ENCODE measurements at regions of chr17 and their contacts with region 1.

Region 1: GRCh38 chr17:45013021-45013997 is 38.1 kb downstream of the DCAKD start:
- DNase-seq: no peak
- ATAC-seq: peak; percentile 57
- H3K4me3 ChIP-seq: no peak overlapping the region
- H3K27ac ChIP-seq: no peak overlapping the region
- H3K4me1 ChIP-seq: peaks cover 10% of the 10 kb centered on the region; the same call in 1 of the 2 replicates
- H3K27me3 ChIP-seq: peaks cover under 1% of the 10 kb centered on the region; the same call in 1 of the 2 replicates
- CTCF ChIP-seq: no peak
- POLR2A ChIP-seq: no peak
- RAD21 ChIP-seq: no peak

Region 2: DNA sequence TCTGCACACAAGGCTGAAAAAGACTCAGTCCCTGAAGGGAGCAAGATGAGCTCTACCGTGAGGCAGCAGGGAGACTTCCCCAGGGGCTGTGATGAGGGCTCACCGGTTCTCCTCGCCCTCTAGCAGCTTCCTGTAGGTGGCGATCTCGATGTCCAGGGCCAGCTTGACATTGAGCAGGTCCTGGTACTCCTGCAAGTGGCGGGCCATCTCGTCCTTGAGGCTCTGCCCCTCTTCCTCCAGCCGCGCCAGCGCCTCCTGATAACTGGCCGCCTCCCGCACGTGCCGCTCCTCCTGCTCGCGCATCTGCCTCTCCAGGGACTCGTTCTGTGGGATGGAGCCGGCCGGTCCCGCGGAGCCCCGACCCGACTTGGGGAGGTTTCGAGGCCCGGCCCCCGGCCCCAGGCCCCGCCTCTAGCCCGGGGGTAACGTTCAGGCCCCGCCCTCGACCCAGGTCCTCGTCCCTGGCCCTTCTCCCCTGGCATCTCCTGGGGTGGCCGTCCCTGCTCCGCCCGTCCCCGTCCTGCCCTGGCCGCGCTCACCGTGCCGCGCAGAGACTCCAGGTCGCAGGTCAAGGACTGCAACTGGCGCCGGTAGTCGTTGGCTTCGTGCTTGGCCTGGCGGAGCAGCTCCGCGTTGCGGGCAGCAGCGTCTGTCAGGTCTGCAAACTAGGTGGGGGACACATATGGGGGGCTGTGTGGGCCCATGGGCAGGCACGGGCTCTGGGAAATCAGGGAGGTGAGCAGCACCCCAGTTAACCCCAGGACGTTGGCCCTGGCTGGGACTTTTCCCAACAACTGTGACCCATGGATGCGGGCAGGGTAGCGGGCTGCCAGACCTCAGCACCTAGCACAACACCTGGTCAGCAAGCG is 101.9 kb before region 1 on chr17:
- CTCF ChIA-PET with region 1: no interaction called
- POLR2A ChIA-PET with region 1: no interaction called
- dilution Hi-C with region 1: no loop called
- in situ Hi-C with region 1: loop called (anchors 5 kb)
- intact Hi-C with region 1: no loop called
- DNase-seq: peak; percentile 24
- ATAC-seq: peak; percentile 42
- H3K4me3 ChIP-seq: no peak overlapping the region
- H3K27ac ChIP-seq: no peak overlapping the region
- H3K4me1 ChIP-seq: peaks cover 11% of the 10 kb centered on the region
- H3K27me3 ChIP-seq: peaks cover 9% of the 10 kb centered on the region; the same call in 1 of the 2 replicates
- CTCF ChIP-seq: peak; percentile 47
- POLR2A ChIP-seq: no peak
- RAD21 ChIP-seq: 0 out of 2 replicates have a peak, but pooled peaks have one; percentile 14

Measured in IMR-90 (cell line).